Dorsolateral prefrontal cortex (tissue), 120 donors: ENCODE measurements at regions of chr16 and their contacts with region 1.

Region 1: DNA sequence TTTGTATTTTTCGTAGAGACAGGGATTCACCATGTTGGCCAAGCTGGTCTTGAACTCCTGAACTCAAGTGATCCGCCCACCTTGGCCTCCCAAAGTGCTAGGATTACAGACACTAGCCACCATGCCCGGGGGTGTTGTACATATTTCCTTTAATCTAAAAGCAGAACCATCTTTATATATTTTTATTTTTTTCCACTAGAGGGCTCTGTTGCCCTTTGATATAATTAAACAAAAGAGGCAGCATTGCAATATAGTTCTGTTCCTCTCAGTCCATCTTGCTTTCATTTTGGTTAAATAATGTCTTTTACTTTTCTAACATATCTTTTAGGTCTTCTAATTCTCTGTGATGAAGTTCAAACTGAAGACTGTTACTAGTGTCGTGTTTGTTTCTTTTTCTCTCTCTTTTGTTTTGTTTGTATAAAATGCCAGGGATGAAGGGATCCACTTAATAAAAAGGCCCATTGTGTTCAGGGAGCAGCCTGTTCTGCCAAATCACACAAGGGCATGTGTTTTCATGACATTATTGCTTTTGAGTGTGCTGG is 23.4 kb downstream of the WWOX start:
- DNase-seq: peak in 2 of 10 donors; percentile 71 to 73
- H3K4me3 ChIP-seq: peak overlapping the region in 51 of 59 donors; percentile 8 to 59 (median 36)
- H3K27ac ChIP-seq: peak overlapping the region; percentile 72 to 99 (median 96)
- H3K27me3 ChIP-seq: no peaks in the 10 kb centered on the region
- CTCF ChIP-seq: peak; percentile 58 to 91 (median 76)

Region 2: GRCh38 chr16:77711775-77712174 is 411.1 kb before region 1 on chr16:
- intact Hi-C with region 1: no loop called
- DNase-seq: no peak
- H3K4me3 ChIP-seq: no peak overlapping the region
- H3K27ac ChIP-seq: no peak overlapping the region
- H3K27me3 ChIP-seq: peaks cover 0 to 4% (median 0%) of the 10 kb centered on the region in 45 donors
- CTCF ChIP-seq: no peak

Region 3: DNA sequence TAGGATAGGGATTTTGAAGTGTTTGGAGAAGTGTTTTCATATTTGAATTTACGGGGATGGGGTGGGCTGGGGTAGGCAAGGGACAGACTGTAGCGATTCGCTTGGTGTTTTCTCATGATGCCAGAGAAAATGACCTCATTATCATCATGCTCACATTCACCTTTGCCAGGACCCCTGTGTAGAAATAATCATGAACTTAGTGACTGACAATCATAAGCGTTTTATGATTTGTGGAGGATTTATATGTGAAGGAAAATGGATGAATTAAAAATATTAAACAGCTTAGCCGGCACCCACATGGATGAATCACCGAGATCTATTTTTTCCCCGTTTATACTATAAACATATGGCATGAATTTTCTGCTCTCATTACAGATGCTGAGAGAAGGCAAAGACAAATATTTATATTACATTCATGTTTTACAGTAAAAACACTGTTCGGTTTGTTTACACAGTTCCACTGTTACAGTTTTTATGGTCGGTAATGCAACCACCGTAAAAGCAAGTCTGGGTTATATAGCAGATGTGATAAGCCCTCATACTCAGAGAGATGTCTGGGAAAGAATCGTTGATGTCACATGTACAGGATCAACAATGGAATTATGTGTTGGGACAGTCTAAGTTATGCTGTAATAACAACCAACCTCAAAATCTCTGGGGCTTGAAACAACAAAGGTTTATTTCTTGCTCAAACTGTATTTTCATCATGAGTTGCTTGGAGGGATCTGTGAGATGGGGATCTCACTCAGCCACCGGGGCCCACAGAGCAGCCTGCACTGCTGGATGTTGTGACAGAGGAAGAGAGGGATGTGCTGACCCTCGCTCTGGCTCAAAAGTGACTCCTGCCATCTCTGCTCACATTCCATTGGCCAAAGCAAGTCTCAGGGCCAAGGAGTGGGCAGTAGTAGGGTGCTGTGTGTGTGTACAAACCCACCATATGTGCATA is 61.7 kb after region 1 on chr16:
- intact Hi-C with region 1: loop called in 1 of 2 experiments (anchors 10 kb)
- DNase-seq: peak in 1 of 10 donors; percentile 15
- H3K4me3 ChIP-seq: peak overlapping the region; percentile 10 to 63 (median 45)
- H3K27ac ChIP-seq: peak overlapping the region in 55 of 59 donors; percentile 6 to 86 (median 72)
- H3K27me3 ChIP-seq: no peaks in the 10 kb centered on the region
- CTCF ChIP-seq: no peak

Region 4: GRCh38 chr16:78227855-78228254 is 105.0 kb after region 1 on chr16:
- intact Hi-C with region 1: loop called in 1 of 2 experiments (anchors 5 kb)
- DNase-seq: no peak
- H3K4me3 ChIP-seq: no peak overlapping the region
- H3K27ac ChIP-seq: no peak overlapping the region
- H3K27me3 ChIP-seq: no peaks in the 10 kb centered on the region
- CTCF ChIP-seq: peak in 40 of 56 donors; percentile 10 to 48 (median 30)

Region 5: GRCh38 chr16:78235168-78235800 is 112.4 kb after region 1 on chr16:
- intact Hi-C with region 1: loop called in 1 of 2 experiments (anchors 2 kb)
- DNase-seq: peak; percentile 60 to 84 (median 76)
- H3K4me3 ChIP-seq: peak overlapping the region in 3 of 59 donors; percentile 7 to 35 (median 20)
- H3K27ac ChIP-seq: peak overlapping the region in 26 of 59 donors; percentile 2 to 79 (median 42)
- H3K27me3 ChIP-seq: no peaks in the 10 kb centered on the region
- CTCF ChIP-seq: peak; percentile 58 to 93 (median 85)

Region 6: DNA sequence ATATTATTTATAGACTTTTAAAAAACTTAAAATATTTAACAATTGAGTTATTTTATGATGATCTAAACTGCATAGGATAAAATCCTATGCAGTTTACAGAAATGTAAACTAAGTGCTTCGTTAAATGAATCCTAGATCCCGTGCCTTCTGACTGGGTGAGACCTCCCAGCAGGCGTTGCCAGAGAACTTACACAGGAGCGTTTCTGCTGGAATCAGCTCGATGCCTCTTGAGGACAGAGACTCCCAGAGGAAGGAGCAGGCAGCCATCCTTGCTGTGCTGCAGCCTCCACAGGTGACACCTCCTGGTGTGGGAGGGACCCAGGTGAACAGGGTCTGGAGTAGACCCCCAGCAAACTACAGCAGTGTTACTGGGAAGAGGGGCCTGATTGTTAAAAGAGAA is 137.0 kb after region 1 on chr16:
- intact Hi-C with region 1: no loop called
- DNase-seq: no peak
- H3K4me3 ChIP-seq: no peak overlapping the region
- H3K27ac ChIP-seq: no peak overlapping the region
- H3K27me3 ChIP-seq: no peaks in the 10 kb centered on the region
- CTCF ChIP-seq: no peak

Region 7: GRCh38 chr16:78437352-78437968 is 314.6 kb after region 1 on chr16:
- intact Hi-C with region 1: loop called in 1 of 2 experiments (anchors 5 kb)
- DNase-seq: peak in 5 of 10 donors; percentile 10 to 70 (median 43)
- H3K4me3 ChIP-seq: no peak overlapping the region
- H3K27ac ChIP-seq: peak overlapping the region in 1 of 59 donors; percentile 39
- H3K27me3 ChIP-seq: no peaks in the 10 kb centered on the region
- CTCF ChIP-seq: peak; percentile 63 to 93 (median 84)

Region 8: GRCh38 chr16:78483124-78483992 is 360.5 kb after region 1 on chr16:
- intact Hi-C with region 1: loop called in 1 of 2 experiments (anchors 10 kb)
- DNase-seq: no peak
- H3K4me3 ChIP-seq: no peak overlapping the region
- H3K27ac ChIP-seq: no peak overlapping the region
- H3K27me3 ChIP-seq: no peaks in the 10 kb centered on the region
- CTCF ChIP-seq: no peak

Region 9: DNA sequence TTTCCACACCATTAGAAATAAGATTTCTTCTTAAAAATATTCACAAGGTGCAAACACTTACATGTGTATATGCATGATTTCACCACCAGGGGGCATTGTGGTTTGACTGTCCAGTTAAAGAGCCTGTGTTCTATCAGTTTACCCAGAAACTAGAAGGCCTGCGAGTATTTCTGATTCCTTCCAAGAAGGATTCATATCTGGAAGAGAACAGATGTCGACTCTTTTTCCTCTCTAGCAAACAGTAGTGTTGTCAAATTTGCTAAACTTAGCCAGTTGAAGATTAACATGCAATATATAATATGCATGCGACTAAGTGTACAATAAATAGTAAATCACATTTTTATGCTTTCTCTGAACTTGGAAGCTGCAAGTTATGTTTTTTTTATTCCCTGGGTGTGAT is 380.8 kb after region 1 on chr16:
- intact Hi-C with region 1: loop called in 1 of 2 experiments (anchors 5 kb)
- DNase-seq: peak in 4 of 10 donors; percentile 36 to 84 (median 60)
- H3K4me3 ChIP-seq: no peak overlapping the region
- H3K27ac ChIP-seq: peak overlapping the region in 4 of 59 donors; percentile 11 to 61 (median 40)
- H3K27me3 ChIP-seq: no peaks in the 10 kb centered on the region
- CTCF ChIP-seq: peak; percentile 86 to 98 (median 94)